Transverse colon (tissue), 4 donors: ENCODE measurements at regions of chr4 and their contacts with region 1.

Region 1: GRCh38 chr4:163554870-163555465 is 60.5 kb downstream of the TMA16 start:
- DNase-seq: no peak
- H3K4me3 ChIP-seq: no peak overlapping the region
- H3K27ac ChIP-seq: no peak overlapping the region
- H3K4me1 ChIP-seq: peaks cover 3 to 18% (median 7%) of the 10 kb centered on the region in 4 donors
- H3K27me3 ChIP-seq: no peaks in the 10 kb centered on the region
- CTCF ChIP-seq: peak; percentile 53 to 69 (median 62)
- EP300 ChIP-seq: no peak
- POLR2A ChIP-seq: no peak

Region 2: GRCh38 chr4:163663454-163664225 is 108.7 kb after region 1 on chr4:
- in situ Hi-C with region 1: loop called in 1 of 4 experiments (anchors 10 kb)
- intact Hi-C with region 1: no loop called
- DNase-seq: no peak
- H3K4me3 ChIP-seq: no peak overlapping the region
- H3K27ac ChIP-seq: peak overlapping the region in 2 of 4 donors; percentile 16 to 44
- H3K4me1 ChIP-seq: peaks cover 0 to 3% (median 0%) of the 10 kb centered on the region in 4 donors
- H3K27me3 ChIP-seq: no peaks in the 10 kb centered on the region
- CTCF ChIP-seq: no peak
- EP300 ChIP-seq: no peak
- POLR2A ChIP-seq: no peak

Region 3: DNA sequence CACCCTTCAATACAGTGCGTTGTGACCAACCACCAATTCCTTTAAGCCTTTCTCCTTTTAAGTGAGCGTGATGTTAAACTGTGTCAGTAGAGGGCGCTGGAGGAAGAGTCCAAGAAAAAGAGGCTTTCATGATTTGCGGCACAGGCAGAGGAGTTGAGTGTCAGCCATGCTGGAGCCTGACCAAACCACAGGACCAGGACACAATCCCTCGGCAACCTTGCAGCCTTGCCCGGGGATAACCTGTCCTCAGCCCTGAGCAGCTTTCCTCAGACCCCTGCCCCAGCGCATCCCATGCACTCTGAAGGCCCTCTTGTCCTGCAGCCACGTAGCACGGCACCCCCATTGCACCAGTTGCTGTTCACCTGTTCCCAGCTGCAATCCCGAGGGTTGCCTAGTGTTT is 1145.5 kb after region 1 on chr4:
- in situ Hi-C with region 1: loop called in 2 of 4 experiments (anchors 25 kb)
- intact Hi-C with region 1: no loop called
- DNase-seq: no peak
- H3K4me3 ChIP-seq: no peak overlapping the region
- H3K27ac ChIP-seq: no peak overlapping the region
- H3K4me1 ChIP-seq: no peaks in the 10 kb centered on the region
- H3K27me3 ChIP-seq: no peaks in the 10 kb centered on the region
- CTCF ChIP-seq: peak in 1 of 5 experiments; percentile 8
- EP300 ChIP-seq: no peak
- POLR2A ChIP-seq: no peak

Region 4: GRCh38 chr4:164731827-164732474 is 1177.0 kb after region 1 on chr4:
- in situ Hi-C with region 1: loop called in 1 of 4 experiments (anchors 25 kb)
- intact Hi-C with region 1: no loop called
- DNase-seq: peak; percentile 32
- H3K4me3 ChIP-seq: no peak overlapping the region
- H3K27ac ChIP-seq: no peak overlapping the region
- H3K4me1 ChIP-seq: no peaks in the 10 kb centered on the region
- H3K27me3 ChIP-seq: peaks cover 6% of the 10 kb centered on the region
- CTCF ChIP-seq: peak; percentile 52 to 83 (median 78)
- EP300 ChIP-seq: no peak
- POLR2A ChIP-seq: no peak